ENCODE measurements at regions of chr4 and their contacts with region 1.

Region 1: DNA sequence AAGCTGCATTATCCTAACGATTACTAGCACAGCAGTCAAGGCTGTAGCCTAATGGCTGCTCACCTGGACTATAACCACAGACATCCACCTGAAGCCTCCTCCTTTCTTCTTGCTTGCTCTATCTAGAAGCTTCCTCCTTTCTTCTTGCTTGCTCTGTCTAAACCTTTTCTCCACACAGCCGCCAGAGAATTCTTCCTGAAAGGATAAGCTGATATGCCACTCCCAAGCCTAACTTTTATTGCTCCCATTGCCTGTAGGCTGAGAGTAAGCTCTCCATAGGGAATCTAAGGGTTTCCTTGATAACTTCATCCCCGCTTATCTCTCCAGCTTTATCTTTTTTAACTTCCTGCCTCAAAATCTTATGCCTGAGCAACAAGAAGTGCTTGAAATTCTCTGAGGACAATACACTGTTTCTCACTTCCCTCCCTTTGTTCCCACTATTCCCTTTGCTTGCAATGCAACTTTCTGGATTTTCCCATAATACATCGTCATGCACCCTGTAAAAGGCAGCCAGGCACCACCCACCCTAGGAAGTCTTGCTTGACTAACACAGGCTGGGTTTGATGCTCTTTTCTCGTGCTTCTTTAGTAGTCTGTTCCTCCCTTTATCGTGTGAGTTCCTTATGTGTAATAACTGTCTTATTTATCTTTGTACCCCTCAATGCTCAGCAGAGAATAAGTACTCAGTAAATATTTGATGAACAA is 1.4 kb upstream of the LRIT3 start:
- DNase-seq: no peak
- ATAC-seq: no peak
- H3K4me3 ChIP-seq: no peak overlapping the region
- H3K4me3 Mint-ChIP-seq: no peak overlapping the region
- H3K27ac ChIP-seq: no peak overlapping the region
- H3K27ac Mint-ChIP-seq: no peak overlapping the region
- H3K4me1 ChIP-seq: no peaks in the 10 kb centered on the region
- H3K4me1 Mint-ChIP-seq: no peaks in the 10 kb centered on the region
- H3K27me3 ChIP-seq: no peaks in the 10 kb centered on the region
- H3K27me3 Mint-ChIP-seq: peaks cover 0 to 2% of the 10 kb centered on the region in 2 donors

Region 2: DNA sequence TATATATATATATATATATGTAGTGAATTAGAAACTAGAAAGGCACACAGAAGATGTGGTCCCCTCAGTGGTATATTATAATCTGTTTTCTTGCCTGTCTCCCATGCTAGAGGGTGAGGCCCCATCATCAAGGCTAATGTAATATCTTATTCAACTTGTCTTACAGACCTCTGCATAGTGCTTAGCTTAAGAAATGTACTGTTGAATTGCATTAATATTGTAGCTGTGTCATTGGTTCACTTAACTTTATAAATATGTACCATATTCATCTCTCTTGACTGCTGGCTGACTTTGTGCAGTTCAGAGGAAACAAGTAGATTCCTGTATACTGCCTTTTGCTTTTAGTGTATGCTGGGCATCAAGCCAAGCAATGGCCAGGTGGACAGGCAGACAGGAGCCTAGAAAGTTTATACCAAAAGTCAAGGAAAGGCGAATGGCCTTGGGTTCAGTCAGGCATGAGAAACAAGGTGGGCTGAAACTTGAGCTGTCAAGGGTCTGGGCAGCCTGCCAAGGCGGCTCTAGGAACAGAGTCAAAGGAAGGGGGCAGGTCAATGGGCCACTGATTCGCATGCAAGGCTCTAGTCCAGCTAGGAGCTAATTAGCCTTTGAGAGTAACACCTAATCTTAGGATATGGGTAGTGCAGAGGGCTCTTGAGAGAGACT is 1599.0 kb before region 1 on chr4:
- CTCF ChIA-PET with region 1: no interaction called
- POLR2A ChIA-PET with region 1: interaction called in 1 of 2 experiments, 10 read pairs
- DNase-seq: no peak
- ATAC-seq: no peak
- H3K4me3 ChIP-seq: no peak overlapping the region
- H3K4me3 Mint-ChIP-seq: no peak overlapping the region
- H3K27ac ChIP-seq: no peak overlapping the region
- H3K27ac Mint-ChIP-seq: no peak overlapping the region
- H3K4me1 ChIP-seq: peaks cover 2 to 11% of the 10 kb centered on the region in 2 experiments
- H3K4me1 Mint-ChIP-seq: peaks cover 10 to 16% (median 13%) of the 10 kb centered on the region in 3 donors
- H3K27me3 ChIP-seq: no peaks in the 10 kb centered on the region
- H3K27me3 Mint-ChIP-seq: no peaks in the 10 kb centered on the region

Measured in T-cell (primary cell).